Activated CD4-positive, alpha-beta memory T cell treated with anti-CD3 and anti-CD28 coated beads for 36 hours (primary cell): ENCODE measurements at regions of chr10 and their contacts with region 1.

Region 1: DNA sequence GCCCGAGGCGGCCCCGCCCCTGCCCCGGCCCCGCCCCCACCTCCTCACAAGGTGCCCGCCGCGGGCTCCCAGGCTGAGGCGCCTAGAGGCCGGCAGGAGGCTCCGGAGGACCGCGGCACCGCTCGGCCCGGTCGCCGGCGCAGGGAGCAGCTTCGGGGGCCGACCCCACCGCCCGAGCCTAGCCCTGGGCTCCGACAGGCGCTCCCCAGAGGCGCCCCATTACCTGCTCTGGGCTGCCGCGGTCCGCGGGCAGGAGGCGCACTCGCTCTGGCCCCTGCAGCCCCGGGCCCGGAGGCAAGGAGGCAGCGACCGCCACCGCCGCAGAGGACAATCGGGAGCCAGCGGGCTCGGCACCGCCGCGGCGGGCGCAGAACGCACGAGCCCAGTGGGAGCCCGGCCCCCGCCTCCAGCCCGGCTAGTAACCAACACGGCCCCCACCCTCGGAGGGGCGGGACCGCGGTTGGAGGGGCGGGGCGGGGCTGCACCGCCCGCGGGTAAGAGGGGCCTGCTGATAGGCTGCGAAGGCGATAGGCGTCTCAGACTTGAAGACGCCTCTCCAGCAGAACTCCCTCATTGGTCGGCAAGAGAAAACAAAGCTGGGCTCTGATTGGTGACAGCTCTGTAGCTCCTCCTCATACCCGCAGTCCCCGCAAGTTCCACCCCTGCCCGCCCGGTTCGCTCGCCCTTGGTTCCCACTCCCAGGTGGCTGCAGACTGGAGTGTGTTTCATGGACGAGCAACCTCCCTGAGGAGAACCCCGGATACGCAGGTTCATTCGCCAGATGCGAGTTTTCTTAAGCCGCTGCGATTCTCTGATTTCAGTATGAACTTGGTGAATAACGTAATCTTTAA is at the start of gene MPP7:
- DNase-seq: peak; percentile 97
- H3K4me3 Mint-ChIP-seq: peak within 1 kb of the TSS; percentile 90
- H3K27ac Mint-ChIP-seq: peak within 1 kb of the TSS; percentile 71
- H3K4me1 Mint-ChIP-seq: peaks cover 46% of the 10 kb centered on the region
- H3K27me3 Mint-ChIP-seq: no peaks in the 10 kb centered on the region
- total RNA-seq, gene MPP7: 11.6 to 12.8 TPM

Region 2: GRCh38 chr10:28250782-28251181 is 52.1 kb before region 1 on chr10:
- CTCF ChIA-PET with region 1: interaction called, 14 read pairs
- POLR2A ChIA-PET with region 1: no interaction called
- intact Hi-C with region 1: loop called (anchors 2 kb)
- DNase-seq: no peak
- H3K4me3 Mint-ChIP-seq: no peak overlapping the region
- H3K27ac Mint-ChIP-seq: no peak overlapping the region
- H3K4me1 Mint-ChIP-seq: peaks cover 6% of the 10 kb centered on the region
- H3K27me3 Mint-ChIP-seq: no peaks in the 10 kb centered on the region

Region 3: GRCh38 chr10:28291881-28292297 is 11.0 kb before region 1 on chr10:
- CTCF ChIA-PET with region 1: interaction called, 8 read pairs
- POLR2A ChIA-PET with region 1: interaction called, 6 read pairs
- intact Hi-C with region 1: loop called (anchors 1 kb)
- DNase-seq: peak; percentile 77
- H3K4me3 Mint-ChIP-seq: no peak overlapping the region
- H3K27ac Mint-ChIP-seq: peak overlapping the region; percentile 7
- H3K4me1 Mint-ChIP-seq: peaks cover 43% of the 10 kb centered on the region
- H3K27me3 Mint-ChIP-seq: no peaks in the 10 kb centered on the region

Region 4: GRCh38 chr10:28326516-28327490 is 23.9 kb after region 1 on chr10:
- CTCF ChIA-PET with region 1: interaction called, 77 read pairs
- POLR2A ChIA-PET with region 1: interaction called, 50 read pairs
- intact Hi-C with region 1: no loop called
- DNase-seq: no peak
- H3K4me3 Mint-ChIP-seq: peak overlapping the region; percentile 30
- H3K27ac Mint-ChIP-seq: peak overlapping the region; percentile 24
- H3K4me1 Mint-ChIP-seq: peaks cover 63% of the 10 kb centered on the region
- H3K27me3 Mint-ChIP-seq: no peaks in the 10 kb centered on the region

Region 5: DNA sequence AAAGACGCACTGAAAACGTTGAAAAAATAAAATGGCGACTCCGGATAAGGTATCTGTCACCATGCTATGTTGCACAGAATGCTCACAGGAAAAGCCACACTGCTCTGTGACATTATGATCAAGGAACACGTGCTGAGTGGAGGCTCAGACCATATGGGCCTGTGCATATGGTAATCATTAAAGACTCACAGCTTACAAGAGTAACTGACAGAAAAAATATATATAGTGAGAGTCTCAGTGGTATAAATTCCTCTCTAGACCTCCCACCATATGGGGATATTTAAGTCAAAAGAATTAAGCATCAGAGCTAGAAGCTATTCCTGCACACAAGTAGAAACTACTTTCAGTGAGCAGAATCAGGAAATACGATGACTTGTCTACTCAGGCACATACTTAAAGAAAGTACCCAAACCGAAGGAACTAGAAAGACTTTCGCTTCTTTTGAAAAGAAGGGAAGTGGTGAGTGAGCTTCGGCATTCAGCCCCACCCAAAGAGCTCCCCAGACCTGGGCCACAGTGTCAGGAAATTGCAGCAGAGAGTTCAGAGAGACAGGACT is 65.1 kb after region 1 on chr10:
- CTCF ChIA-PET with region 1: interaction called, 19 read pairs
- POLR2A ChIA-PET with region 1: interaction called, 6 read pairs
- intact Hi-C with region 1: loop called (anchors 1 kb)
- DNase-seq: peak; percentile 76
- H3K4me3 Mint-ChIP-seq: peak overlapping the region; percentile 45
- H3K27ac Mint-ChIP-seq: peak overlapping the region; percentile 86
- H3K4me1 Mint-ChIP-seq: peaks cover 45% of the 10 kb centered on the region
- H3K27me3 Mint-ChIP-seq: no peaks in the 10 kb centered on the region

Region 6: GRCh38 chr10:28381903-28382347 is 79.1 kb after region 1 on chr10:
- CTCF ChIA-PET with region 1: interaction called, 159 read pairs
- POLR2A ChIA-PET with region 1: interaction called, 3 read pairs
- intact Hi-C with region 1: loop called (anchors 1 kb)
- DNase-seq: peak; percentile 89
- H3K4me3 Mint-ChIP-seq: no peak overlapping the region
- H3K27ac Mint-ChIP-seq: no peak overlapping the region
- H3K4me1 Mint-ChIP-seq: peaks cover 28% of the 10 kb centered on the region
- H3K27me3 Mint-ChIP-seq: no peaks in the 10 kb centered on the region

Region 7: GRCh38 chr10:28463676-28464395 is 161.0 kb after region 1 on chr10:
- CTCF ChIA-PET with region 1: no interaction called
- POLR2A ChIA-PET with region 1: no interaction called
- intact Hi-C with region 1: no loop called
- DNase-seq: no peak
- H3K4me3 Mint-ChIP-seq: no peak overlapping the region
- H3K27ac Mint-ChIP-seq: no peak overlapping the region
- H3K4me1 Mint-ChIP-seq: no peaks in the 10 kb centered on the region
- H3K27me3 Mint-ChIP-seq: peaks cover 6% of the 10 kb centered on the region